Breast epithelium (tissue), 4 donors: ENCODE measurements at regions of chr4 and their contacts with region 1.

Region 1: GRCh38 chr4:137819964-137820383 is 287.7 kb upstream of the PCDH18 start:
- DNase-seq: no peak
- H3K4me3 ChIP-seq: no peak overlapping the region
- H3K27ac ChIP-seq: no peak overlapping the region
- H3K4me1 ChIP-seq: no peaks in the 10 kb centered on the region
- H3K27me3 ChIP-seq: no peaks in the 10 kb centered on the region
- CTCF ChIP-seq: peak in 2 of 3 donors; percentile 38 to 48
- POLR2A ChIP-seq: no peak

Region 2: DNA sequence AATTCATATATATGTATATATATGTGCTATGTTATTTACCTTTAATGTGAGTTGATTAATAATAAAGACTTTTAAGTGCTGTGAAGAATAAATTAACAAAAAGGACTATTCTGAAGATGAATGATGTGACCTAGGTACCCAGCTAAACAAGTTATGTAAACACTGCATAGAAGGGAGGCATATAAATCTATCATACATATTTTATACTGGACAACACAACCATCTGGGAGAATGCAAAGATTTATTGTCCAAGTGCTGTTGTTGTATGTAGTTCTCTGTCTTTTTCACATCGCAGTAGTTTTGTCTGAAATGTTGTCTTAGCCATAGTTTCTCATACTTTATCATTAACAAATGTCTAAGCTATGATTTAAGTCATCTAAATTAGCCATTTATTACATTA is 625.3 kb before region 1 on chr4:
- intact Hi-C with region 1: loop called (anchors 5 kb)
- DNase-seq: no peak
- H3K4me3 ChIP-seq: no peak overlapping the region
- H3K27ac ChIP-seq: no peak overlapping the region
- H3K4me1 ChIP-seq: no peaks in the 10 kb centered on the region
- H3K27me3 ChIP-seq: no peaks in the 10 kb centered on the region
- CTCF ChIP-seq: no peak
- POLR2A ChIP-seq: no peak

Region 3: GRCh38 chr4:138307319-138307718 is 487.3 kb after region 1 on chr4:
- intact Hi-C with region 1: no loop called
- DNase-seq: no peak
- H3K4me3 ChIP-seq: no peak overlapping the region
- H3K27ac ChIP-seq: no peak overlapping the region
- H3K4me1 ChIP-seq: no peaks in the 10 kb centered on the region
- H3K27me3 ChIP-seq: no peaks in the 10 kb centered on the region
- CTCF ChIP-seq: no peak
- POLR2A ChIP-seq: no peak

Region 4: DNA sequence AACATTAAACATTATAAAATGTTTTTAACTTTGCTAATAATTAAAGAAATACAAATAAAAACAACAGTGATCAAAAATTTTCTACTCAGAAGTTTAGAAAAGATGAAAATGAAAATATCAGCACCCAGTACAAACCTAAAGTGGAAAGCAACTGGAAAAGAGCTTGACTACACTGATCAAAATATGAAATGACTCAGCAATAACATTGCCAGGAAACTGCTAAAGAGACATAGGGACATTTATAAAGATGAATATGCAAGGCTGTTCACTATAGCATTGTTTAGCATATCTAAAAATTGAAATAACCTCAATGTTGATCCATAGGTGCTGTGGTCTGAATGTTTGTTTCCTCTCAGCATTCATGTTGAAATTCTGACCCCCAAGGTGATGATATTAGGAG is 1107.1 kb after region 1 on chr4:
- intact Hi-C with region 1: no loop called
- DNase-seq: no peak
- H3K4me3 ChIP-seq: no peak overlapping the region
- H3K27ac ChIP-seq: no peak overlapping the region
- H3K4me1 ChIP-seq: no peaks in the 10 kb centered on the region
- H3K27me3 ChIP-seq: no peaks in the 10 kb centered on the region
- CTCF ChIP-seq: no peak
- POLR2A ChIP-seq: no peak